ENCODE measurements at regions of chrX and their contacts with region 1.

Region 1: GRCh38 chrX:103774070-103774642 is 2.5 kb upstream of the PLP1 start:
- ATAC-seq: peak in 4 of 8 experiments; percentile 67 to 84 (median 77)
- H3K4me3 ChIP-seq: no peak overlapping the region
- H3K27ac ChIP-seq: no peak overlapping the region
- H3K4me1 ChIP-seq: peaks cover under 1 to 15% of the 10 kb centered on the region in 2 donors

Region 2: GRCh38 chrX:103663981-103664762 is 110.0 kb before region 1 on chrX:
- in situ Hi-C with region 1: no loop called
- ATAC-seq: peak in 2 of 8 experiments; percentile 45
- H3K4me3 ChIP-seq: no peak overlapping the region
- H3K27ac ChIP-seq: no peak overlapping the region
- H3K4me1 ChIP-seq: no peaks in the 10 kb centered on the region

Region 3: DNA sequence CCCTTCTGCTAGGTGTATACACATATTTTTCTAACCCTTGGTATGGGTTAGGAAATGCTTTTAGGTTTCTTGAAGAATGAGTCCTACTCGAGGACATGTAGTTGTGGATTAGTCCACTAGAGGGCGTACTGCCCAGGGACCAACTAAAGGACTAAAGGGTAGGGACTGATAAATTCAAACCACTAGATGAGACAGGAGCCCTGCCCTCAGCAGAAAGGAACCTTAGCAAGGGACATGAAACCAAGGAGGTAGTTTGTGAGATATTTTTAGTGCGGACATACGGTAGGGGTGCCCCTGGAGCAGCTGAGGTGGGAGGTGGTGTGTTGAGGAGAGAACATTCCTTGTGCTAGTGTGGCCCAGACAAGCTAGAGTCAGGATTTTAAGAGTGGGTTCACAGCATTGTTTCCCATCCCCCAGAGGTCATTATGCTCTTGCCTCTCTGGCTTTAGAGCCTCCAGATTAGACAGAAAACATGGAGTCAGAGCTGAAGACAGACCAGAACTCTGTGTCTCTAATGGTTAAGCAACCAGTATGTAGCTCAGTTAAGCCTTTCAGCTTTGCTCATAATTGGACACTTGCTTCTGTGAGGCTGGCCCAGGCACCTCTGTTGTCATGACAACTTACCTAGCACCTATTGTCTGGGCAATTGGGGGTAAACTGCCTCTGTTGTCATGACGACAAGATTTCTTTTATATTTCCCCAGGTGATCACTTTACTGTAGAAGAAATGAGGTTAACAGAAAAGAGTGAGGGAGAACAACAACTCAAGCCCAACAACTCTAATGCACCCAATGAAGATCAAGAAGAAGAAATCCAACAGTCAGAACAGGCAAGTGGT is 62.4 kb before region 1 on chrX:
- in situ Hi-C with region 1: loop called in 2 of 9 experiments (anchors 10 kb)
- ATAC-seq: peak in 4 of 8 experiments; percentile 19 to 77 (median 64)
- H3K4me3 ChIP-seq: no peak overlapping the region
- H3K27ac ChIP-seq: no peak overlapping the region
- H3K4me1 ChIP-seq: peaks cover 2 to 3% of the 10 kb centered on the region in 2 donors

Measured in motor neuron (in vitro differentiated cells).